Endothelial cell of umbilical vein (primary cell): ENCODE measurements at regions of chr14 and their contacts with region 1.

Region 1: DNA sequence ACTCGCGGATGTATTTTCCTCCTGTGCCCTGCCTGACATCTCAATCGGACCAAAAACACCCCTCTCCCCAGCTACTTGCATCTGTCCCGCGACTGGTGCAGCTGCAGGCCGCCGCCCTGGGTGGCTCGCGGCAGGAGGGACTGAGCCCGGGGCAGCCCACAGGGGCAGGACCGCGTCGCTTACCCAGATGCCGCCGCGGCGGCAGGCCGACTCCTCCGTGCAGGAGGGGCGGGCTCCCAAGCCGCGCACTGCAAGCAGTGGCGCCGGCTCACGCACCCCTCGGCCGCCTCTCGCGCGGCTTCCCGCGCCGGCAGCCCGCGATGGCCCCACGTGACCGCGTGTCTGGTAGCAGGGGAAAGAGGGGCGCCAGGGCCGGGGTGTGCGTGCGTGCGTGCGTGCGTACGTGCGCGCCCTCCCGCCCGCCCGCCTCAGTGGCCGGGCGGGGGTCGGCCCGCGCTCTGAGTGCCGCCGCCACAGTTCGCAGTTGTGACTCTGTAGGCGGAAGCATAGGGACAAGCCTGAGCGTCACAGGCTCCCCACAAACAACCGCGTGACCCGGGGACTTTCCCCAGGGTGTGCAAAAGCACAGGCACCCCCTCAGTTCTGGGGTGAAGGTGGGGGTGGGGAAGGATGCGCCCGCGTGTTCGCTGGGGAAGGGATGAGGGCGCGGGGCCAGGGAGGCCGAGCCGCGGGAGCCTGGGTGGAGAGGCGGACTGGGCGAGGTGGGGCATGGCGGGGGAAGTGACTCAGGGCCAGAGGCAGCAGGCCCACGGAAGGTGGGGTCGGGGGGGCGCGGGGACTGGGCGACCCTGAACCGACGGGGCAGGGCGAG is at the start of gene ZBTB25:
- DNase-seq: peak; percentile 95
- H3K4me3 ChIP-seq: peak within 1 kb of the TSS; percentile 71 to 97 (median 93)
- H3K27ac ChIP-seq: peak within 1 kb of the TSS; percentile 95
- H3K4me1 ChIP-seq: peaks cover 38% of the 10 kb centered on the region
- H3K27me3 ChIP-seq: no peaks in the 10 kb centered on the region
- CTCF ChIP-seq: no peak
- POLR2A ChIP-seq: peak; percentile 84
- total RNA-seq, gene ZBTB25: 6.4 and 7.7 TPM in 2 replicates

Region 2: DNA sequence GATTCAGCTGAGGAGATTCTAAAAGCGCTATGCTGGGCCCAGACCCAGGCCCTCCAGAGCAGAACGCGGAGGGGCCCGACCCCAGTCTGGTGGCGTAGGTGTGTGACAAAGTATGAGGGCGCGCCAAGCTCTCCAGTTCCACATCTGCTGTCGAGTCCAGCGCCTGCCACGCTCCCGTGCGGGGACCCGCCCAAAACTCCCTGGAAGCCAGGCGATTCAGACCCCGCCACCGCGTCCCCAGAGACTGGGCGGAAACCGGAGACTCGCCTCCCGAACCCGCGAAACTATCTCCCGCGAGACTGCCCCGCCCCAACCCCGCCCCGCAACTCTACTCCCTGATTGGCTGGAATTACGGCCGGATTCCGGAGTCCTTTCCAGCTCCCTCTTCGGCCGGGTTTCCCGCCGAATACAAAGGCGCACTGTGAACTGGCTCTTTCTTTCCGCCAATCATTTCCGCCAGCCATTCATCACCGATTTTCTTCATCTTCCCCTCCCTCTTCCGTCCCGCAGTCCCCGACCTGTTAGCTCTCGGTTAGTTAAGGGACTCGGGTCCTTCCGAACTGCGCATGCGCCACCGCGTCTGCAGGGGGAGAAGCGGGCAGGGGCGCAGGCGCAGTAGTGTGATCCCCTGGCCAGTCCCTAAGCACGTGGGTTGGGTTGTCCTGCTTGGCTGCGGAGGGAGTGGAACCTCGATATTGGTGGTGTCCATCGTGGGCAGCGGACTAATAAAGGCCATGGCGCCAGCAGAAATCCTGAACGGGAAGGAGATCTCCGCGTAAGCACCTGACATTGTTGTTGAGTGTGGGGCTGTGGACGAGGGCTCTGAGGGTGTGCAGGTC is 115.8 kb before region 1 on chr14 and contains the start of gene MTHFD1:
- CTCF ChIA-PET with region 1: no interaction called
- POLR2A ChIA-PET with region 1: interaction called, 3 read pairs
- dilution Hi-C with region 1: no loop called
- intact Hi-C with region 1: loop called (anchors 1 kb)
- DNase-seq: peak; percentile 99
- H3K4me3 ChIP-seq: peak within 1 kb of the TSS; percentile 56 to 94 (median 88)
- H3K27ac ChIP-seq: peak within 1 kb of the TSS; percentile 68
- H3K4me1 ChIP-seq: peaks cover 16% of the 10 kb centered on the region
- H3K27me3 ChIP-seq: no peaks in the 10 kb centered on the region
- CTCF ChIP-seq: no peak
- POLR2A ChIP-seq: peak; percentile 48
- total RNA-seq, gene MTHFD1: 104 and 114 TPM in 2 replicates